ENCODE measurements at regions of chr5 and their contacts with region 1.

Region 1: DNA sequence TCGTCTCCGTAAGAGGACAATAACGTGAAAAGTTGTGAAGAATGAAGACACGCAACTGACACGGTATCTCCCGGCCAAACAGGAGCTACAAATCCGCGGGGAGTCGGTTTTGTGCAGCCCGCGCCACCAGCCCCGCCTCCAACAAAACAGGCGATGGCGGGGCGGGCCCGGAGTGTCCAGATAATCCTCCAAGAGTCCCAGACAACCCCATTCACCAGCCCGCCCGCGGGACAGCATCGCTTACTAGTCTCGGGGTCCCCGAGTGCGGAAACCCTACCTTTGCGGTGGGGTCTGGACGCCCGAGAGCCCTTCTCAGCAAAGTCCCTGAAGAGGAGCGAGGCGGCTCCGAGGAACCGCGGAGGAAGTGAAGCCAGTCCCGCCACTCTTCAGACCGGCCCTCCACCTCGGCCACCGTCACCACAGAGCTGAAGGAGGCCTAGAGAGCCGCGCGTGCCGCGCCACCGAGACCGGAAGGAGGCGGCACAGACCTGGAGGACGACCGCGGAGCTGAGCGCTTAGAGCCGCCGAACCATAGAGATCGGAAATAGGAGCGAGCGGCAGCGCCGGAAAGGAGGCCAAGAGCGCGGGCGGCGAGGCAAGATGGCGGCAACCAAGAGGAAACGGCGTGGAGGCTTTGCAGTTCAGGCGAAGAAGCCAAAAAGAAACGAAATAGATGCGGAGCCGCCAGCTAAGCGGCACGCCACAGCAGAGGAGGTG is at the starts of genes BRIX1 and RAD1:
- DNase-seq: peak; percentile 89 to 94 (median 93)
- H3K4me3 ChIP-seq: peak within 1 kb of the TSS; percentile 78
- H3K4me3 Mint-ChIP-seq: peak within 1 kb of the TSS in 1 of 7 donors; percentile 84
- H3K27ac ChIP-seq: peak within 1 kb of the TSS; percentile 89
- H3K27ac Mint-ChIP-seq: peak within 1 kb of the TSS in 3 of 8 donors; percentile 65 to 73 (median 68)
- H3K4me1 ChIP-seq: peaks cover 34% of the 10 kb centered on the region
- H3K4me1 Mint-ChIP-seq: peaks cover 28 to 49% (median 38%) of the 10 kb centered on the region in 3 donors
- H3K27me3 ChIP-seq: no peaks in the 10 kb centered on the region
- H3K27me3 Mint-ChIP-seq: no peaks in the 10 kb centered on the region
- total RNA-seq, gene BRIX1: 102 to 114 TPM
- total RNA-seq, gene RAD1: 41.3 to 44.2 TPM

Region 2: GRCh38 chr5:34838785-34839714 is 76.2 kb before region 1 on chr5 and contains the start of gene TTC23L:
- CTCF ChIA-PET with region 1: interaction called, 3 read pairs
- POLR2A ChIA-PET with region 1: interaction called, 11 read pairs
- DNase-seq: peak; percentile 82 to 96 (median 89)
- H3K4me3 ChIP-seq: peak within 1 kb of the TSS; percentile 85
- H3K4me3 Mint-ChIP-seq: peak within 1 kb of the TSS; percentile 92 to 98 (median 95)
- H3K27ac ChIP-seq: peak within 1 kb of the TSS; percentile 50
- H3K27ac Mint-ChIP-seq: peak within 1 kb of the TSS; percentile 97 to 100 (median 98)
- H3K4me1 ChIP-seq: peaks cover 6% of the 10 kb centered on the region
- H3K4me1 Mint-ChIP-seq: peaks cover 11 to 17% (median 15%) of the 10 kb centered on the region in 3 donors
- H3K27me3 ChIP-seq: no peaks in the 10 kb centered on the region
- H3K27me3 Mint-ChIP-seq: peaks cover 10 to 19% of the 10 kb centered on the region in 2 donors
- total RNA-seq, gene TTC23L: 0.24 to 0.63 TPM

Region 3: DNA sequence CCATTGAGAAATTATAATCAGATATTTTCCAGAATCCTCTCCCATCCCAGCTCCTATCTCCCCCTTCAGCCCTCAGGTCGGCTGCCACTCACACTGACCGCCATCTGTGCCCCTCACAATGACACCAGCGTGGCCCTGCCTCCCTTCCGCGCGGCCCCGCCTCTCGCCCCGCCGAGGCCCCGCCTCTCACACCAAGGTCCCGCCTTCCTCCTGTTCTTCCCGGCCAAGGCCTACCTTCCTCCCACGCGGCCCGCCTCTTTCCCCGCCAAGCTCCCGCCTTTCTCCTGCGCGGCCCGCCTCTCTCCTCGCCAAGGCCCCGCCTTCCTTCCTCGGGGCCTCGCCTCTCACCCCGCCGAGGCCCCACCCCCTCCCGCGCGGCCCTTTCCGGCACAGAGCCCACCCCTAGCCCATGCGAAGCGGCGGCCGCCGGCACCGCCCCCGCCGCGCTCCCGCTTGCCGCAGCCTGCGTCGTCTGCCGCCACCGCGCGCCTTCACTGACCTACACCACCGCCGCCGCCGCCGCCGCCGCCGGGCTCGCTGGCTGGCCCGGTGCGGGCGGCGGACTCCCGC is 13.9 kb after region 1 on chr5 and contains the start of gene DNAJC21:
- CTCF ChIA-PET with region 1: interaction called, 32 read pairs
- POLR2A ChIA-PET with region 1: interaction called, 97 read pairs
- DNase-seq: peak; percentile 95 to 98 (median 97)
- H3K4me3 ChIP-seq: peak within 1 kb of the TSS; percentile 86
- H3K4me3 Mint-ChIP-seq: peak within 1 kb of the TSS; percentile 94 to 100 (median 96)
- H3K27ac ChIP-seq: peak within 1 kb of the TSS; percentile 86
- H3K27ac Mint-ChIP-seq: peak within 1 kb of the TSS; percentile 84 to 98 (median 97)
- H3K4me1 ChIP-seq: peaks cover 23% of the 10 kb centered on the region
- H3K4me1 Mint-ChIP-seq: peaks cover 29 to 45% (median 32%) of the 10 kb centered on the region in 3 donors
- H3K27me3 ChIP-seq: no peaks in the 10 kb centered on the region
- H3K27me3 Mint-ChIP-seq: peaks cover 0 to 3% of the 10 kb centered on the region in 2 donors
- total RNA-seq, gene DNAJC21: 64.7 to 70.6 TPM

Measured in CD8-positive, alpha-beta memory T cell (primary cell).